ENCODE measurements at regions of chr22 and their contacts with region 1.

Region 1: GRCh38 chr22:20319745-20320658 is at the start of gene DGCR6L:
- DNase-seq: peak; percentile 98 to 99 (median 98)
- ATAC-seq: peak; percentile 77 to 92 (median 88)
- H3K4me3 ChIP-seq: peak within 1 kb of the TSS; percentile 61 to 100 (median 92)
- H3K27ac ChIP-seq: peak within 1 kb of the TSS; percentile 77 to 99 (median 92)
- H3K4me1 ChIP-seq: peaks cover 0 to 55% (median 31%) of the 10 kb centered on the region in 12 donors
- H3K27me3 ChIP-seq: no peaks in the 10 kb centered on the region
- CTCF ChIP-seq: peak in 2 of 12 donors; percentile 9 to 17
- POLR2A ChIP-seq: peak in 1 of 2 donors; percentile 93
- total RNA-seq, gene DGCR6L: 31.8 to 101 (median 39.2) TPM

Region 2: GRCh38 chr22:20393909-20394691 is 74.1 kb after region 1 on chr22 and contains the start of gene ZNF74:
- intact Hi-C with region 1: loop called in 1 of 10 experiments (anchors 5 kb)
- DNase-seq: peak; percentile 91 to 96 (median 94)
- ATAC-seq: peak; percentile 93 to 99 (median 97)
- H3K4me3 ChIP-seq: peak within 1 kb of the TSS; percentile 58 to 96 (median 76)
- H3K27ac ChIP-seq: peak within 1 kb of the TSS; percentile 11 to 88 (median 69)
- H3K4me1 ChIP-seq: peaks cover 0 to 30% (median 14%) of the 10 kb centered on the region in 12 donors
- H3K27me3 ChIP-seq: no peaks in the 10 kb centered on the region
- CTCF ChIP-seq: peak in 2 of 12 donors; percentile 11 to 15
- POLR2A ChIP-seq: peak in 1 of 2 donors; percentile 69
- total RNA-seq, gene ZNF74: 3.8 to 6.5 (median 4.8) TPM